Activated B cell treated with CpG ODN at 0.5 μM for 24 hours (primary cell): ENCODE measurements at regions of chr6 and their contacts with region 1.

Region 1: DNA sequence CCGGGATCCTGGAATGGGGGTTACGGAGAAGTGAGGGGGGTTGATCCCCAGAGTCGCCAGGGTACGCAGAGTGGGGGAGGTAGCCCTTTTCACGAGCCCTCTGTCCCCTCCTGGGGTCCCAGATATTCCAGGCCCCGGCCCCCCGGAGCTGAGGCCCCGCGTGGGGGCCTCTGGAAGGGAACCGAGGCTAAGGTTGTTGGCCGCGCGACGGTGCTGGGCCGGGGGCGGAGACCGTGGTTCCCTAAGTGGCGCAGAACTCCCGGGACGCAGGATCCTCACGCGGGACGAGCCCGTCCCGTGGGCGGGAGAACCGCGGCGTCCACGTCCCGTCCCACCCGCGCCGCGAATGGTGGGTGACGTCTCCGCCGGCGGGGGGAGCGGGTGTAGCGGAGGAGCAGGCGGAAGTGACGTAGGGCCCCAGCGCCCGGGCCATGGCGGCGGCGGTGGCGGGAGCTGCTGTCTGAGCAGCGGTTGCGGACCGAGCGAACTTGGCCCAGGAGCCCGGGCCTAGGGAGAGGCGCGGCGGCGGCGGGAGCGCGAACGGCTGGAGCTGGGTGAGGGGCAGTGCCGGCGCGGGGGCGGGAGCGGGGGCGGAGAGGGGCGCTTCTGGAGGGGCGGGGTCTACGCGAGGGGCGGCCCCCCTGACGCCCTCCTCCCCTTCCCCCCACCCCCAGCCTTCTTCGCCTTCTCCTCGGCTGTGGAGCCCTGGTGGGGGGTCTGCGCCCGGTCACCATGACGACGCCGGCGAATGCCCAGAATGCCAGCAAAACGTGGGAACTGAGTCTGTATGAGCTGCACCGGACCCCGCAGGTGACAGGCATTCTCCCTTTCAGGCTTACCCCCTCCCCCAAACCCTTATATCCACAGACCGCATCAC is at the start of gene RING1:
- DNase-seq: peak; percentile 88
- ATAC-seq: peak; percentile 51
- H3K4me3 Mint-ChIP-seq: peak within 1 kb of the TSS; percentile 87
- H3K27ac Mint-ChIP-seq: peak within 1 kb of the TSS; percentile 82
- H3K4me1 Mint-ChIP-seq: peaks cover 45% of the 10 kb centered on the region
- H3K27me3 Mint-ChIP-seq: peaks cover 13% of the 10 kb centered on the region
- CTCF ChIP-seq: no peak
- total RNA-seq, gene RING1: 41.7 and 43.8 TPM in 2 replicates

Region 2: DNA sequence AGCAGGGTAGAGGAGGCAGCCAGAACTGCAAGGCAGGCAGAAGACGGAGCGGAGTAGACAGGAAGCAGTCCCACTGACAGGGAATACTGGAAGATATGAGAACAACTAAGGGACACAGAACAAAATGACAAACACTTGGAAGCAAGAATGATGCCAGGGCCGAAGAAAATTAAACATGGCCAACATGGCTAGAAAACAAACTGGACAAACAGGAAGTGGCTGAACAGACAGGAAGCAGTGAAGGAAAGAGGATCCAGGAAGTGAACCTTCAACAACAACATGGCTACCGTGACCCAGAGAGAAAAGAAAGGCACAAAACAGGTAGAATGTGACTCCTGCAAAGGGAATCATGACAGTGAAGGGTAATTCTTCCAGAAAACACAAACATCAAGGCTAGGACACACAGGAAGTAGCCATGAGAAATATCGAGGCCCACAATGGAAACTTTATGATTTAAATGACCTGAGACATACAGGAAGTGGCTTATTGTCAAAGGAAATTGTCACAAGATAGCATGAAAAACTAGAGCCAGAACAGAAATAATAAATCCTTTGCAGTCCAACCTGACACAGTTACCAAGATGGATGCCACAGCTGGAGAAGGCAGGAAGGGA is 25.2 kb before region 1 on chr6:
- CTCF ChIA-PET with region 1: no interaction called
- POLR2A ChIA-PET with region 1: interaction called, 11 read pairs
- intact Hi-C with region 1: no loop called
- DNase-seq: no peak
- ATAC-seq: peak; percentile 49
- H3K4me3 Mint-ChIP-seq: peak overlapping the region; percentile 42
- H3K27ac Mint-ChIP-seq: peak overlapping the region; percentile 57
- H3K4me1 Mint-ChIP-seq: peaks cover 17% of the 10 kb centered on the region
- H3K27me3 Mint-ChIP-seq: peaks cover 27% of the 10 kb centered on the region
- CTCF ChIP-seq: no peak

Region 3: DNA sequence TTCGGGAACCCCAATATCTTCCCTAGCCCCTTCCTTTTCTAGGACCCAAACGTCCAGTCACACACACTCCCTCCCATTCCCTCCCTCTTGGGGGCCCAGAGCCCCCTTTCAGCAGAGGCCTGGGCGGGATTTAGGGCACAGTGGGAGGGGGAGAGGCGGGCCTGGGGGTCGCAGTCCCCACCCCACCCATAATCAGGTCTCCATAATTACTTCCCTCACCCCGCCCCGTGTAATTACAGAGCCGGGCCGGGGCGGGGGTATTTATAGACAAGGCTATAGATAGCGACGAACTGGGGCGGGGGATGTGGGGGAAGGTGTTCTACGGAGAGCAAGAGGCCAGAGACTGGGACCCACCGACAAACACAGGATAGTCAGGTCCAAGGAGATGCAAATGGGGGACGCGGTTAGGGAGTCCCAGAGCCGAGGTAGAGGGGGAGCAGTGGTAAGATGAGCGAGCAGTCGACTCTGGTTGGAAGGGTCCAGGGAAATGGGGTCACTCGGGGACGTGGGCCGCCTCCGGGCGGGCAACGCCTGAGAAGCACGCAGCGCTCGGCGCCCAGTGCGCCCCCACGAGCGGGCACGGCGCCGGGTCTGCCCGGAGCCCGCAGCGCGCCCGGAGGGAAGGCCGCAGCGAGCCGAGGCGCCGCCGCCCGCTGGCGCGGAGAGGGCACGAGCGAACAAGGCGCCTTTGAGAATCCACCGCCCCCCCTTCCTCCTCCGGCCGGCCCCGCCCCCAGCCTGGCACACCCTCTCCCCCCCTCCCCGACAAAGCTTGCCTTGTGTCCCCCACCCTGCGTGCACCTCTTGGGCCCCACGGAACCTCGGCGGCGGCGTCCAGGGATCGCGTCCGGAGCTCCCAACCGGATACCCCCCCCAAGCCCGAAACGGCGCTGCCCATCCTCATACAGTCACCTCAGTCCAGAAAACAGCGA is 15.4 kb before region 1 on chr6:
- CTCF ChIA-PET with region 1: interaction called, 5 read pairs
- POLR2A ChIA-PET with region 1: interaction called, 36 read pairs
- intact Hi-C with region 1: loop called (anchors 2 kb)
- DNase-seq: peak; percentile 42
- ATAC-seq: peak; percentile 48
- H3K4me3 Mint-ChIP-seq: peak overlapping the region; percentile 82
- H3K27ac Mint-ChIP-seq: no peak overlapping the region
- H3K4me1 Mint-ChIP-seq: peaks cover 31% of the 10 kb centered on the region
- H3K27me3 Mint-ChIP-seq: peaks cover 23% of the 10 kb centered on the region
- CTCF ChIP-seq: no peak

Region 4: DNA sequence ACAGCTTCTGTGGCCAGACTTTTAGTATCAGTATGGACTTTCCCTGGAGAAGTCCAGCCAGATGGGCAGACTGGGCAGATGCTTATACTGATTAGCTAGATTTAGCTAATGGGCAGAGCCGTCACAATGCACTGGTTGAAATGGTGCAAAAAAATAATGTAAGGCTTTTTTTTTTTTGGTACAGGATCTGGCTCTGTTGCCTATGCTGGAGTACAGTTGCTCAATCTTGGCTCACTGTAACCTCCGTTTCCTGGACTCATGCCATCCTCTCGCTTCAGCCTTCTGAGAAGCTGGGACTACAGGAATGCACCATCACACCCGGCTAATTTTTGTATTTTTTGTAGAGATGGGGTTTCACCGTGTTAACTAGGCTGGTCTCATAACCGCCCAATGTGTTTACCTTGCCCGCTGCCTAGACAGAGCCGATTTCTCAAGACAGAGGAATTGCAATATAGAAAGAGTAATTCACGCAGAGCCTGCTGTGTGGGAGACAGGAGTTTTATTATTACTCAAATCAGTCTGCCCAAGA is 166.9 kb after region 1 on chr6:
- CTCF ChIA-PET with region 1: no interaction called
- POLR2A ChIA-PET with region 1: no interaction called
- intact Hi-C with region 1: no loop called
- DNase-seq: no peak
- ATAC-seq: no peak
- H3K4me3 Mint-ChIP-seq: no peak overlapping the region
- H3K27ac Mint-ChIP-seq: no peak overlapping the region
- H3K4me1 Mint-ChIP-seq: no peaks in the 10 kb centered on the region
- H3K27me3 Mint-ChIP-seq: no peaks in the 10 kb centered on the region
- CTCF ChIP-seq: no peak